GM10248 (cell line): ENCODE measurements at regions of chr4 and their contacts with region 1.

Region 1: GRCh38 chr4:148044912-148045352 is 313.0 kb downstream of the ARHGAP10 start:
- DNase-seq: peak; percentile 46
- CTCF ChIP-seq: peak; percentile 13

Region 2: DNA sequence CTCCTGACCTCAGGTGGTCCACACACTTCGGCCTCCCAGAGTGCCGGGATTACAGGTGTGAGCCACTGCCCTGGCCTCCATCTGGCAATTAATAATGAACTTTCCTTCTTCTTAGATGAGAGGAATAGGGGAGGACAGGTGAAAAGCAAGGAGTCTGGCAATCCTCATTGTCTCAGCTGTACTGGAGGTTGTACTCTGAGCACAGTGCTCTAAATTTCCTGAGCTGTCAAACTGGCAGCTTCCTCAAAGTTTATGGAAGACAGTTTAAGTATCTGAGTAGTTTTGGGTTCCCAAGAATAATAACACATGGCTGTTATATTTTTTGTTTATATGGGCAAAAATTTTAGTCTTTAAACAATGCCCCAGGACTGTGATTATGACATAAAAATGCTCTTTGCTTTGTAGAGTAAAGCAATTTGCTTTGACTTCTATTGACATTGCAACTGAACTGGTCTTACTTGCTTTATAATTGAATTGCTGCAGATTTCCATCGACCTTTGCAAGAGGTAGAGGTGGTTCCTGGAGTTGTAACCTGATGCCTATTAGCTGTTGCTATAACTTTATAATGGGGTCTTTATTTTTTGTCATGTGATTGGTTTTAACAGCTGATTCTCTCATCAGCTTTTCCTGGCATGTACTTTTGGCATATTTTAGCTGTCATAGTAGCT is 10.2 kb before region 1 on chr4:
- CTCF ChIA-PET with region 1: interaction called, 12 read pairs
- POLR2A ChIA-PET with region 1: no interaction called
- DNase-seq: no peak
- CTCF ChIP-seq: no peak

Region 3: DNA sequence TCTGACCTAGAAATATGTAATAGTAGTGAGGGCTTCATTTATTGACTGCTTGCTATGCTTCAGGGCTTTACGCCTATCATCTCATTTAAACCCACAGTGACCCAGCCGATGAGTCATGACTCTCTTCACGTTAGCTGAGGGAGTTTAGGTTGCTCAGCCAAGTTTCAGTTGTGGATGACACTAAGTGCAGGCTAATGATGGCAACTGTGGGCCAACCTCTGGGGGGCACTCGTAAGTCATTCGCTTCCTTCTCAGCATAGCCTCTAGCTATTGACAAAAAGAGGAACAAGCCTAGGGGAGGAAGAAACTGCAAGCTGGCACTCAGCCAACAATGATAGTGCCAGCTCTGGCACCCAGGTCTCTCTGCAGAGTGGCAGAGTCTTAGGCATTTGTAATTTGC is 11.9 kb after region 1 on chr4:
- CTCF ChIA-PET with region 1: interaction called, 21 read pairs
- POLR2A ChIA-PET with region 1: interaction called, 3 read pairs
- DNase-seq: peak; percentile 57
- CTCF ChIP-seq: peak; percentile 46

Region 4: GRCh38 chr4:148090503-148091476 is 45.9 kb after region 1 on chr4:
- CTCF ChIA-PET with region 1: no interaction called
- POLR2A ChIA-PET with region 1: no interaction called
- DNase-seq: no peak
- CTCF ChIP-seq: no peak